ENCODE measurements at regions of chr22 and their contacts with region 1.

Region 1: GRCh38 chr22:41690336-41690875 is 1.7 kb upstream of the SNU13 start:
- DNase-seq: no peak
- ATAC-seq: no peak

Region 2: GRCh38 chr22:41501209-41501608 is 189.2 kb before region 1 on chr22:
- intact Hi-C with region 1: no loop called
- DNase-seq: no peak
- ATAC-seq: peak; percentile 10

Region 3: GRCh38 chr22:41557401-41558240 is 132.8 kb before region 1 on chr22:
- intact Hi-C with region 1: no loop called
- DNase-seq: peak; percentile 83
- ATAC-seq: peak; percentile 35

Region 4: DNA sequence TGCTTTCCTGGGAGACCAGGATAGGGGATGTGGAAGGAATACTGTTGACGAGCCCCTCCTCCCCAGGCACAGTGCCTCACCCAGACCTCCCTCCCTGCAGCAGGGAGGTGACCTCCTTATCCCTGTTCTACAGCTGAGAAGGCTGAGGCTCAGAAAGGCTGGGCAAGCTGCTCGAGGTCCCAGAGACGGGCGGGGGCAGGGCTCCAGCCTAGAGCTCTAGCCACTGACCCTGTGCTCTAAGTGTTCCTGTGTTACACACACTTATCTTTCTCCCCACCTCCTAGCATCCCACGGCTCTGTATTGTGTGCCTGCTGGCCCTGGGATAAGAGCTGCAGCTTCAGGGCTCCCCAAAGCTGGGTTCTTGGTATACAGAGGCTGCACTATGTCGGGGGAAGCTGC is 118.0 kb after region 1 on chr22:
- intact Hi-C with region 1: no loop called
- DNase-seq: no peak
- ATAC-seq: no peak

Region 5: GRCh38 chr22:41940832-41941765 is 250.7 kb after region 1 on chr22:
- intact Hi-C with region 1: loop called (anchors 5 kb)
- DNase-seq: peak; percentile 90
- ATAC-seq: peak; percentile 81